ENCODE measurements at regions of chr3 and their contacts with region 1.

Region 1: DNA sequence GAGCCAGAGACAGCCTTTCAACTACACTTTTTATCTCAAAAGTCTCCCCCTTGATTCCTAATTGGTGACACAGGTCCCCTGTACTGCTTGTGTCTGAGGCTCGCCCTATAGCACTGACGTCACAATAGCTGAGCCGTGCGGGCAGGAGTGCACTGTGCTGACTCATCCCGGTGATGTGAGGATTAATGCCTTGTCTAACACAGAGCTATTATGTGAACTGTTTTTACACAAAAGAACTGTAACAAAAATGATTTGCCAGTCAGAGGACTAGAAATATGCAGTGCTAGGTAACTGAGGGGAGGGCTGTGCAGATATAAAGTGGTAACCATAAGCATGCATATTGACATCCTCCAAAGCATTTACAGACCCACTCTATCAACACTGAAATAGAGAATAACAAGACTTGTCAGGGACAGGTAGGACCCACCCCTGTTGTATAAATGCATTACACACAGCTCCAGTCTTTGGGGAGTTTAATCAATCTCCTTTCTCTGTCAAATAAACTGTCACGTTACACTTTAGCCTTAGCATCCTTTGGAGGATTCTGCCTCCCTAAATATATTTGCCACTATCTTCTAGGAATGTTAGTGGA is 205.0 kb downstream of the TIGIT start:
- DNase-seq: peak; percentile 16 to 57
- H3K4me3 ChIP-seq: no peak overlapping the region
- H3K4me3 Mint-ChIP-seq: no peak overlapping the region
- H3K27ac Mint-ChIP-seq: peak overlapping the region; percentile 22
- H3K4me1 ChIP-seq: peaks cover 46% of the 10 kb centered on the region
- H3K4me1 Mint-ChIP-seq: peaks cover 35% of the 10 kb centered on the region
- H3K27me3 ChIP-seq: no peaks in the 10 kb centered on the region
- H3K27me3 Mint-ChIP-seq: no peaks in the 10 kb centered on the region
- CTCF ChIP-seq: no peak

Region 2: GRCh38 chr3:114370537-114371174 is 128.2 kb before region 1 on chr3:
- CTCF ChIA-PET with region 1: no interaction called
- POLR2A ChIA-PET with region 1: no interaction called
- intact Hi-C with region 1: loop called (anchors 5 kb)
- DNase-seq: peak; percentile 67 to 73
- H3K4me3 ChIP-seq: no peak overlapping the region
- H3K4me3 Mint-ChIP-seq: peak overlapping the region; percentile 6
- H3K27ac Mint-ChIP-seq: peak overlapping the region; percentile 39
- H3K4me1 ChIP-seq: peaks cover 49% of the 10 kb centered on the region
- H3K4me1 Mint-ChIP-seq: peaks cover 31% of the 10 kb centered on the region
- H3K27me3 ChIP-seq: no peaks in the 10 kb centered on the region
- H3K27me3 Mint-ChIP-seq: no peaks in the 10 kb centered on the region
- CTCF ChIP-seq: peak; percentile 33 to 53

Region 3: GRCh38 chr3:114466251-114466650 is 32.6 kb before region 1 on chr3:
- CTCF ChIA-PET with region 1: no interaction called
- POLR2A ChIA-PET with region 1: no interaction called
- intact Hi-C with region 1: loop called (anchors 2 kb)
- DNase-seq: no peak
- H3K4me3 ChIP-seq: no peak overlapping the region
- H3K4me3 Mint-ChIP-seq: no peak overlapping the region
- H3K27ac Mint-ChIP-seq: peak overlapping the region; percentile 62
- H3K4me1 ChIP-seq: peaks cover 39% of the 10 kb centered on the region
- H3K4me1 Mint-ChIP-seq: peaks cover 20% of the 10 kb centered on the region
- H3K27me3 ChIP-seq: no peaks in the 10 kb centered on the region
- H3K27me3 Mint-ChIP-seq: no peaks in the 10 kb centered on the region
- CTCF ChIP-seq: no peak

Region 4: DNA sequence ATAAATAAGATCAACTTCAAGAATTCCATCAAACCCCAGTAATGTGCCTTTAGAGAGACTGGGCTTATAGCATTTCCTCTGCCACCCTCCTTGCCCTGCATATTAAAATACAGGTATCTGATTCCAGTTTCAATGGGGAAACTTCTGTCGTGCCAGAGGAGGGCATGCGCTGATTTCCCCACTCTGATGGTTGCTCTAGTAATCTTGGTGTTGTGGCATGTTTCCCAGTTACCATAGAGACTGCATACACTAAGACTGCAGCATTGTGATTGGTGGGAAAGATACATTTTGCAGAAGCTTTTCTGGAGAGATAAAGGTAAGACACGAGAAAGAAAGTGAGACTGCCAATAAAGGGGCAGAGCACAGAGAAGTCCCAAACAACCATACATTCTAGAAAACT is 20.5 kb after region 1 on chr3:
- CTCF ChIA-PET with region 1: no interaction called
- POLR2A ChIA-PET with region 1: no interaction called
- intact Hi-C with region 1: loop called (anchors 1 kb)
- DNase-seq: peak in 1 of 2 experiments; percentile 34
- H3K4me3 ChIP-seq: no peak overlapping the region
- H3K4me3 Mint-ChIP-seq: no peak overlapping the region
- H3K27ac Mint-ChIP-seq: no peak overlapping the region
- H3K4me1 ChIP-seq: peaks cover 10% of the 10 kb centered on the region; the same call in 1 of the 2 replicates
- H3K4me1 Mint-ChIP-seq: no peaks in the 10 kb centered on the region
- H3K27me3 ChIP-seq: no peaks in the 10 kb centered on the region
- H3K27me3 Mint-ChIP-seq: no peaks in the 10 kb centered on the region
- CTCF ChIP-seq: no peak